ENCODE measurements at regions of chr17 and their contacts with region 1.

Region 1: DNA sequence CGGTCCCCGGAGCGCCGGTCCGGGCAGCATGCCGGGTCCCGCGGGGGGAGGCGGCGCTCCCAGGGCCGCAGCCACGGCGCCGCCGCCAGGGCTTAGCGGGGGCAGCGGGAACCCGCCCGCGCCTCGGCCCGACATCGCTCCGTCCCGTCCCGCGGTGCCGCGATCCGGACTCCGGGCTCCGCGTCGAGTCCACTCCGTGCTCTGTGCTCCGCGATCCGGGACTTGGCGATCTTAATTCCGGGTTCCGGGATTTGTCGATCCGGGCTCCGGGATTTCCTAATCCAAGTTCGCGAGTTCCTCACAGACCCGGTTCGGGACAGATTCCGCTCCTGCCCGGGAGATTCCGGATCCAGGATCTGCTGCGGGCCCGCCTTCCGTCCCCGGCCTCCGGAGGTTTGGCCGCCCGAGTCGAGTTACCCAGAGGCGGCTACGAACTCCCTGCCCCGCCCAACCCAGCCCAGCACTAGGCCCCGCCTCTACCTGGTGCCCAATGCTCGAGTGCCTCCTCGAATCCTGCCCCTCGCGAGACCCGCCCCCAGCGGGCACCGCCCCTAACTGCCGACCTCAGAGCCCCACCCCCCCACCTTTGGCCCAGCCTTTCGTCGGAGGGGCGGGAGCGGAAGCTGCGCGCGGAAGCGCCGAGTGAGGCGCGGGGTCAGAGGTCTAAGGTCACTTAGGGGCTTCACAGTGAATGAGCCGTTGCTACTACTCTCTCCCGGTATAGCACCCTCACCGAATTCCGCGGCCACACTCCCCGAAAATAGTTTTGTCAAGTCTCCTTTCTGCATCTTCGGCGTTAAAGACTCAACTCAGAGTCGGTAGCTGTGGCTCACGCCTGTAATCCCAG is at the start of gene SMARCD2:
- DNase-seq: peak; percentile 97
- H3K4me3 Mint-ChIP-seq: peak within 1 kb of the TSS; percentile 95
- H3K27ac Mint-ChIP-seq: peak within 1 kb of the TSS; percentile 92
- H3K4me1 Mint-ChIP-seq: peaks cover 24% of the 10 kb centered on the region
- H3K27me3 Mint-ChIP-seq: no peaks in the 10 kb centered on the region
- total RNA-seq, gene SMARCD2: 129 and 130 TPM in 2 replicates

Region 2: GRCh38 chr17:63549946-63550807 is 292.6 kb before region 1 on chr17 and contains the start of gene DCAF7:
- intact Hi-C with region 1: loop called (anchors 2 kb)
- DNase-seq: peak; percentile 100
- H3K4me3 Mint-ChIP-seq: peak within 1 kb of the TSS; percentile 93
- H3K27ac Mint-ChIP-seq: peak within 1 kb of the TSS; percentile 97
- H3K4me1 Mint-ChIP-seq: peaks cover 30% of the 10 kb centered on the region
- H3K27me3 Mint-ChIP-seq: no peaks in the 10 kb centered on the region
- total RNA-seq, gene DCAF7: 118 and 119 TPM in 2 replicates

Region 3: DNA sequence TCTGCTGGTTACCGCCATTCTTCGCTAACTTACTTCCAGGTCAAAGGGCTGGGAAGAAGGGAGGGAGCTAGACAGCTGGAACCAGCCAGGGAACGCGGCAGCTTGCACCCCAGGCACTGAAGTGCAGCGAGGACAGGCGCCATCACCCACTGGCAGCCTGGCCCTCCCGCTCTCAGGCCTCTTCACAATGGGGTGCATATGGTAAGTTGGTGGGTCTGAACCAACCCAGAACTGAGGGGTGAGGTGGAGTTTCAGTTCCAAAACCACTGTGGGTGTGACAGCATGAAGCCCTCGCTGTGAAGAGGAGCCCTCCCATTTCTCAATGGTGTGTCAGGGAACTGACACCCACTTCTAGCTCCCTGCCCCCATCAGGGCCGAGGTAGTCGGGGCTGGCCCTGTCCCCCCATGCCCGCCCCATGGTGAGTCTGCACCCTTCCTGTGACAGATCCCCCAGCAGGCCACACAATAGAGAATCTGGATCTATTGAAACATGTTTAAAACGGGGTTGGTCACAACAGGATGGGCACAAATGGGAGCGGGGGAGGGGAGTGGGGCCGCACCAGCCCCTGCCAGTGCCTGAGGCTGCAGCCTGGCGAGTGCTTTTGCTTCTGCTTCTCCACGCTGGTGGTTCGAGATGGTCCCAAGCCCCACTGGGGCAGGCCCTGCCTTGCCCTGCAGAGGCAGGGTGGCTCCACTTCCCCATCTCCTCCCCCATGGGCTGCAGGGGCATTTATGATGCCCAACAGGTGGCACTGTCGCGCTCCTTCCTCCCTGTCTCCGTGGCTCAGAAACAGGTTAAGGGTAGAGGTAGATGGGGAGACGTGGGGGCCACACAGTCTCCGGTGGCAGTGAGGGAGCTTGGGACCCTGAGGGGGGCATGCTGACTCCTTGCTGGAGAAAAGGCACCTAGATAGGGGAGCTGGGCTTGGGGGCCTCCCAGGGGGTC is 145.1 kb before region 1 on chr17:
- intact Hi-C with region 1: loop called (anchors 2 kb)
- DNase-seq: peak; percentile 77
- H3K4me3 Mint-ChIP-seq: peak overlapping the region; percentile 93
- H3K27ac Mint-ChIP-seq: peak overlapping the region; percentile 90
- H3K4me1 Mint-ChIP-seq: peaks cover 46% of the 10 kb centered on the region
- H3K27me3 Mint-ChIP-seq: no peaks in the 10 kb centered on the region

Region 4: DNA sequence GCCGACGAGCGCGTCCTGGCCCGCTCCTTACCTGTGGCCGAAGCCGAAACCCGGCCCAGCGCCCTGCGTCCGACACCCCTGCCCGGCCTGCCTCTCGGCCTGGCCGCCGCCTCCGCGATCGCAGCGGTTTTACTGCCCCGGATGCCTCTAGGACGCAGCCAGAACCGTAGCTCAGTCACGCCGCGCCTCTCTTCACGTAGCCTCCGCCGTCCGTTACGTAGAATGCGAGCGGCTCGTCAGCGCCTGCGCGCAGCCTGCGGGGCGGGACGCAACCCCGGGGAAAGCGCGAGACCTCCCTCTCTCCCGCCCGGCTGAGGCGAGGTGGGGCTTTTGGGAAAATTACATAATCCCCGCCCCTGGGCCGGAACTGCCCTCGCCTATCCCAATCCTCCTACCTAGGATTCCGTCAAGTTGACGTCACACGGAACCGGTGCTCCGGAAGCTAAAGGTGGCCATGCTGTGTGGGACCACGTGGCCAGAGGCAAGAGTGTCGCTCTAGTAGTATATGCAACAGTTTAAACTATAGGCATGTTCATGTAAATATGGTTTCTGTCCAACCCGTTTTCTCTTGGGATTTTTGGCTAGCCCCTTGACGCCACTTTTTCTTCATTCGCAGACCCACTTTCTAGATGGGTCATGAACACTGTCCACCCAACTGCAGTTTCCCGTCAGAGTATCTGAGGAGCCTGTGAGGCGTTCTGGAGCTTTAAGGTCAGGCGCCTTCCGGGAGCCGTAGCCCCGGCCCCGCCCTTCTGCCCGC is 69.2 kb before region 1 on chr17 and contains the start of gene CCDC47:
- intact Hi-C with region 1: loop called (anchors 1 kb)
- DNase-seq: peak; percentile 99
- H3K4me3 Mint-ChIP-seq: peak within 1 kb of the TSS; percentile 92
- H3K27ac Mint-ChIP-seq: peak within 1 kb of the TSS; percentile 99
- H3K4me1 Mint-ChIP-seq: peaks cover 36% of the 10 kb centered on the region
- H3K27me3 Mint-ChIP-seq: no peaks in the 10 kb centered on the region
- total RNA-seq, gene CCDC47: 70.0 and 73.7 TPM in 2 replicates

Region 5: DNA sequence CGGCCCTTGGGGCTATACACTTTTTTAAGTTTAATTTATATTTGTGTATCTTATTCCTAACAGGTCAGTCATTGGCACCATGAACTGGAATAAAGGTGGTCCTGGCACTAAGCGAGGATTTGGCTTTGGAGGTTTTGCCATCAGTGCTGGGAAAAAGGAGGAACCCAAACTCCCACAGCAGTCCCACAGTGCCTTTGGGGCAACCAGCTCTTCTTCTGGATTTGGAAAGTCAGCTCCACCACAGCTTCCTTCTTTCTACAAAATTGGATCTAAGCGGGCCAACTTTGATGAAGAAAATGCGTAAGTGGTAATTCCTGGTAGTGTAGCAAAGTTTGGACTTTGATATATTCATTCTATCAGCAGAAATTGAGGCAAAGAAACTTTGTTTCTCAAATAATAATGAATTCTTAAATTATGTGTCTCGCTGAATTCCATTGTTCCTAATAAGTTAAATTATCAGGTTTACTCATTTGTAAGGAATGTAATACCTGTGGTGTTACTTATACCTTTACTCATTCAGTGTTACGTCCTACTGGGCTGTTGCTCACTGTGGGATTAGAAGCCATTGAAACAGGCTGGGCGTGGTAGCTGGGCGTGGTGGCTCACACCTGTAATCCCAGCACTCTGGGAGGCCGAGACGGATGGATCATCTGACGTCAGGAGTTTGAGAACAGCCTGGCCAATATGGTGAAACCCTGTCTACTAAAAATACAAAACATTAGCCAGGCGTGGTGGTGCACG is 55.6 kb before region 1 on chr17:
- intact Hi-C with region 1: no loop called
- DNase-seq: no peak
- H3K4me3 Mint-ChIP-seq: no peak overlapping the region
- H3K27ac Mint-ChIP-seq: no peak overlapping the region
- H3K4me1 Mint-ChIP-seq: peaks cover 24% of the 10 kb centered on the region
- H3K27me3 Mint-ChIP-seq: no peaks in the 10 kb centered on the region

Region 6: DNA sequence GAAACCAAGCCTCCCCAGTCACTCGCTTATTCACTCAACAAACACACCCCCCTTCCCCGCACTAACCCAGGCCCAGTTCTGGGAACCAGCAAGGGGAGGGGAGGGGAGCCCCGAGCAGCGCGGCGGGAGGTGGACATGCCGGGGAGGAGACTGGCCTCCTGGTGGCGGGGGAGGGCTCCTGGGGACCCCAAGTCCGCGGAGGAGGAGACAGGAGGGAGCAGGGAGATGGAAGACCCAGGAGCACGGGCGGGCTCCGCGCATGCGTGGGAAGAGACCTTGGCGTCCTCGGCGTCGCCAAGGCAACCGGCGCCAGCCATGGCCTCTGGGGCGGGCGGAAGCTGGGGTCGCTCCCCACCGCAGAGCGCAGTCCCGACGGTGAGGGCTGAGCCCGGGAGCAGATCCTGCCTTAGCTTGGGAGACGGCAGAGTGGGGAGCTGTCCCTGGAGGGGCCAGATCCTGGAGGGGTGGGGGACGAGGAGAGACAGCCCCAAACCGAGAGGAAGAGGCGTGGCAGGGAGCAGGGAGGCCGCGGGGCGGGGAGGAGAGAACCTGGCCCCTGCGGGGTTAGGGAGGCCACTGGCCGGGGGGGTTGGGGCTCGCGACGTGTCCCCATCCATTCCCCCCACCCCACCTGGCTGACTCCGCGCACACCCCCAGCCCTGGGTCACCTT is 155.4 kb after region 1 on chr17 and contains the start of gene PRR29:
- intact Hi-C with region 1: loop called (anchors 10 kb)
- DNase-seq: peak; percentile 68
- H3K4me3 Mint-ChIP-seq: peak within 1 kb of the TSS; percentile 85
- H3K27ac Mint-ChIP-seq: no peak within 1 kb of the TSS
- H3K4me1 Mint-ChIP-seq: peaks cover 27% of the 10 kb centered on the region
- H3K27me3 Mint-ChIP-seq: peaks cover 23% of the 10 kb centered on the region
- total RNA-seq, gene PRR29: 0.14 and 0.18 TPM in 2 replicates

Region 7: DNA sequence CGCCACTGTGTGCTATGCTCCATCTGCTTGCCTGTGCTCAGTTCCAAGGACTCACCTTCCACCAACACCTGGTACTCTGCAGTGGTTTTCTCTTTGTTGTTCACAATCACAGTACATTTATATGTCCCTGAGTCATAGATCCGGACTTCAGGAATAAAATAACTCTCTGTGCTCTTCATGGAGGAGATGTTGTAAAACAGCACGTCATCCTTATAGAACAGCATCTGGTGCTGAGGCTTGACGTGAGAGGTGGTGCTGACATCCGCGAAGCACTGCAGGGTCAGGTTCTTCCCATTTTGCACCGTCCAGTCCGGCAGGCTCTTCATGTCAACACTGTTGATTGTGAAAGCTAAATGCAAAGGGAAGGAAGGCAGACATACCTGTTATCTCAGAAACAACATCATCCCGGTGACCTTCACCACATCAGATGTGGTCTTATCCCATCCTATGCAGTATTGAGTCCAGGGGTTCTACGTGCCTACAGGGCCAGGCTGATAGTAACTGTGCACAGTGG is 535.1 kb after region 1 on chr17:
- intact Hi-C with region 1: no loop called
- DNase-seq: no peak
- H3K4me3 Mint-ChIP-seq: no peak overlapping the region
- H3K27ac Mint-ChIP-seq: no peak overlapping the region
- H3K4me1 Mint-ChIP-seq: peaks cover 3% of the 10 kb centered on the region
- H3K27me3 Mint-ChIP-seq: no peaks in the 10 kb centered on the region

Measured in activated T-helper 2 cell treated with anti-CD3 and anti-CD28 coated beads, Interferon-gamma antibody, Interleukin-2, Interleukin-4, amounts not matched to agents 10 μg/mL and 5 μg/mL and 100 μg/mL, durations not matched to agents 14 hours and 24 hours and 36 hours (primary cell).